PC-9 (cell line): ENCODE measurements at regions of chr3 and their contacts with region 1.

Region 1: DNA sequence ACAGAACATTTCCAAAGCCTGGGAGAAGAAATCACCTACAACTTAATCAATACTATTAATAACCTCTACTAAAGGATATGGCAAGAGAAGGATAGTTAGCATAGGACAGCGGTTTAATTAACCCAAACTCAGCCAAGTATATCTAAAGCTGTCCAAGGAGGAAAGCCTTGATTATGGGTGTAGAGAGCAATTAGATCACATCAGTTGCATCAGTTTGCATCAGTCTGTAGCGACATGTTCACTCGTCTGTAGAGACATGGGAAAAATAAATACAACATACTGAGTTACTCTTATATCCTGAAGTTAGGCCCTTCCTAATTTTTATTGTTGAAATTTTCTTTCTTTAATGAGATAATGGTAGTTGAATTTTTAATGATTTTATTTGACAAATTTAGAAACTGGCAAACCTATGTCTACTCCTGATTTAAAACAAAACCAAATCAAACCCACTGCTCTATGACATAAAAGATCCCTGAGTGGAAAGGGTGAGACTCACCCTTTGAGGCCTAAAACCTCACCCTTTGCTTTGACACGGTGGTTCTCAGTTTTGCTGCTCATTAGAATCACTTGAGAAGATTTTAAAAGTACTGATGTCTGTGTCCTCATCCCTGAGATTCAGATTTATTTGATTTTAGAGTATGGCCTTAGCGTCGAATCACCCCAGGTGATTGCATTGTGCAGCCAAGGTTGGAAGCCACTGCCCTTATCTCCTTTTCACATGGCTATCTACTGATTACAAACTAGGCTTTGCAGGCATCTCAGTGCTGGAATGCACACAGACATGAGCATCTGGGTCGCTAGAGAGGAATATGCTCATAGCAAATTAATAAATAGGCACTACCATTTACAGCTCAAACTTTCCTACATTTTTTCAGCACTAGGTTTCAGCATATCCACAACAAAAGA is 2.8 kb upstream of the CLRN1 start:
- DNase-seq: no peak
- H3K4me3 ChIP-seq: no peak overlapping the region
- H3K27ac ChIP-seq: no peak overlapping the region
- H3K4me1 ChIP-seq: peaks cover 11% of the 10 kb centered on the region
- H3K27me3 ChIP-seq: no peaks in the 10 kb centered on the region
- CTCF ChIP-seq: no peak

Region 2: GRCh38 chr3:150216041-150216811 is 759.1 kb before region 1 on chr3:
- CTCF ChIA-PET with region 1: no interaction called
- POLR2A ChIA-PET with region 1: no interaction called
- intact Hi-C with region 1: no loop called
- DNase-seq: peak; percentile 48 to 63
- H3K4me3 ChIP-seq: no peak overlapping the region
- H3K27ac ChIP-seq: no peak overlapping the region
- H3K4me1 ChIP-seq: peaks cover 10% of the 10 kb centered on the region
- H3K27me3 ChIP-seq: no peaks in the 10 kb centered on the region
- CTCF ChIP-seq: no peak; the same call in 1 of the 2 replicates

Region 3: DNA sequence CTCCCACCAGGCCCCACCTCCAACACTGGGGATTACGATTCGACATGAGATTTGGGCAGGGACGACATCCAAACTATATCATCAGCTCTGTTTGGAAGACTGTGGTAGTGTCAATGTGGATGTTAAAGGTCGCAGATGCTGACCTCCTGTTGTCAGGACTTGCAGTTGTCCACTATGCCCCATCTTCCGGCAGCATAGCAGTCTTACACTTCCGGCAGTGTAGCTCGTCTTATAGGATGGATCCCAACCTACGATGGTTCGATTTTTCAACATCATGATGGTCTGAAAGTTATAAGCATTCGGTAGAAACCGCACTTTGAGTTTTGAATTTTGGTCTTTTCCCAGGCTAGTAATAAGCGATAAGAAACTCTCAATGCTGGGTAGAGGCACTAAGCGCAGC is 23.4 kb before region 1 on chr3:
- CTCF ChIA-PET with region 1: no interaction called
- POLR2A ChIA-PET with region 1: no interaction called
- intact Hi-C with region 1: no loop called
- DNase-seq: no peak
- H3K4me3 ChIP-seq: no peak overlapping the region
- H3K27ac ChIP-seq: no peak overlapping the region
- H3K4me1 ChIP-seq: no peaks in the 10 kb centered on the region
- H3K27me3 ChIP-seq: no peaks in the 10 kb centered on the region
- CTCF ChIP-seq: no peak

Region 4: GRCh38 chr3:150996731-150997130 is 21.4 kb after region 1 on chr3:
- CTCF ChIA-PET with region 1: no interaction called
- POLR2A ChIA-PET with region 1: no interaction called
- intact Hi-C with region 1: no loop called
- DNase-seq: no peak
- H3K4me3 ChIP-seq: no peak overlapping the region
- H3K27ac ChIP-seq: no peak overlapping the region
- H3K4me1 ChIP-seq: no peaks in the 10 kb centered on the region
- H3K27me3 ChIP-seq: no peaks in the 10 kb centered on the region
- CTCF ChIP-seq: no peak

Region 5: DNA sequence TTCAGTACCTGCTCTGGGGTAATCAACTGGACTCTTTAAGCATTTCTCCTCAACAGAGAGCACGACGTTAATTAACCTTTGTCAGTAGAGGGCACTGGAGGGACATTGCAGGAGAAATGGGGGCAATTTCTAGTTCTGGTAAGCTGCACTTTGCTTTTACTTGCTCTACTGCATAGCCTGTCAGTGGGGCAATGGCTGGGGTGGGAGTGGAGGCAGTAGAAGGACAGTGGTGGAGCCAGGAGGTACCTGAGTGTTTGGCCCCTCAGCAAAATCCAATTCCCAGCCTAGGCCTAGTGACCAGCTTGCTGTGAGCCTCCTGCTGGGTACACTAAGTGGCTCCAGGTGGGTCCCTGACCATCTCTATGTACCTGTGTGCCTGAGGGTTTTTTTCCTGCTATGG is 91.8 kb after region 1 on chr3:
- CTCF ChIA-PET with region 1: interaction called, 10 read pairs
- POLR2A ChIA-PET with region 1: no interaction called
- intact Hi-C with region 1: no loop called
- DNase-seq: no peak
- H3K4me3 ChIP-seq: no peak overlapping the region
- H3K27ac ChIP-seq: no peak overlapping the region
- H3K4me1 ChIP-seq: no peaks in the 10 kb centered on the region
- H3K27me3 ChIP-seq: no peaks in the 10 kb centered on the region
- CTCF ChIP-seq: peak; percentile 57; the same call in 1 of the 2 replicates